Naive thymus-derived CD4-positive, alpha-beta T cell (primary cell): ENCODE measurements at regions of chrX and their contacts with region 1.

Region 1: GRCh38 chrX:48911412-48912182 is at the start of gene SLC35A2:
- DNase-seq: peak; percentile 75 to 92 (median 90)
- ATAC-seq: peak; percentile 78
- H3K4me3 ChIP-seq: peak within 1 kb of the TSS; percentile 77
- H3K4me3 Mint-ChIP-seq: peak within 1 kb of the TSS; percentile 86 to 96 (median 90)
- H3K27ac ChIP-seq: peak within 1 kb of the TSS; percentile 76
- H3K27ac Mint-ChIP-seq: peak within 1 kb of the TSS; percentile 86 to 98 (median 96)
- H3K4me1 ChIP-seq: peaks cover 32 to 42% of the 10 kb centered on the region in 2 donors
- H3K4me1 Mint-ChIP-seq: peaks cover 20 to 61% (median 42%) of the 10 kb centered on the region in 7 donors
- H3K27me3 ChIP-seq: no peaks in the 10 kb centered on the region
- H3K27me3 Mint-ChIP-seq: peaks cover 0 to 3% (median 0%) of the 10 kb centered on the region in 5 donors
- total RNA-seq, gene SLC35A2: 13.9 to 36.7 (median 18.5) TPM

Region 2: GRCh38 chrX:47125102-47125501 is 1786.5 kb before region 1 on chrX:
- CTCF ChIA-PET with region 1: no interaction called
- POLR2A ChIA-PET with region 1: no interaction called
- intact Hi-C with region 1: no loop called
- DNase-seq: no peak
- ATAC-seq: no peak
- H3K4me3 ChIP-seq: no peak overlapping the region
- H3K4me3 Mint-ChIP-seq: no peak overlapping the region
- H3K27ac ChIP-seq: no peak overlapping the region
- H3K27ac Mint-ChIP-seq: no peak overlapping the region
- H3K4me1 ChIP-seq: no peaks in the 10 kb centered on the region
- H3K4me1 Mint-ChIP-seq: peaks cover 0 to 4% (median 0%) of the 10 kb centered on the region in 7 donors
- H3K27me3 ChIP-seq: no peaks in the 10 kb centered on the region
- H3K27me3 Mint-ChIP-seq: no peaks in the 10 kb centered on the region

Region 3: DNA sequence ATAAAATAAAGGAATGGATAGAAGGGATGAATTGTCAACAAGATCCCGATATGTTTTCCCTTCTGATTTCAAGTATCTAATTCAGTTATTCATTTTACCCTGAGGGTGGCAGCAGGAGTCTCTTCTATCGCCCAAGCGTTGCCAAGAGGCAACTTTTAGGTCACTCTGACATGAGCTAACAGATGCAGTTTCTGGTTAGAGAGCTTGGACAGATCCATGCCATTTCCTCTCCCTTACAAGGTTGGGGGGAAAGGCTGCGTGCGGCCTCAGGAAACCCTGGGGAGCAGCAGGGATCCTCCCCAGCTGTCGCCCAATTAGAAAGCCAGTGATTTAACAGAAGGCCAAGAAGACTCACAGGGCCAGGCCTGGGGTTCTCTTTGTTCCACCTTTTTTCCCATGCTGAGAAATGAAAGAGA is 263.3 kb before region 1 on chrX:
- CTCF ChIA-PET with region 1: interaction called, 3 read pairs
- POLR2A ChIA-PET with region 1: interaction called, 8 read pairs
- intact Hi-C with region 1: loop called in 1 of 2 experiments (anchors 2 kb)
- DNase-seq: peak in 8 of 9 donors; percentile 17 to 54 (median 38)
- ATAC-seq: peak; percentile 70
- H3K4me3 ChIP-seq: no peak overlapping the region
- H3K4me3 Mint-ChIP-seq: no peak overlapping the region
- H3K27ac ChIP-seq: no peak overlapping the region
- H3K27ac Mint-ChIP-seq: peak overlapping the region in 3 of 9 donors; percentile 42 to 58 (median 53)
- H3K4me1 ChIP-seq: no peaks in the 10 kb centered on the region
- H3K4me1 Mint-ChIP-seq: peaks cover 0 to 18% (median 13%) of the 10 kb centered on the region in 7 donors
- H3K27me3 ChIP-seq: no peaks in the 10 kb centered on the region
- H3K27me3 Mint-ChIP-seq: no peaks in the 10 kb centered on the region

Region 4: DNA sequence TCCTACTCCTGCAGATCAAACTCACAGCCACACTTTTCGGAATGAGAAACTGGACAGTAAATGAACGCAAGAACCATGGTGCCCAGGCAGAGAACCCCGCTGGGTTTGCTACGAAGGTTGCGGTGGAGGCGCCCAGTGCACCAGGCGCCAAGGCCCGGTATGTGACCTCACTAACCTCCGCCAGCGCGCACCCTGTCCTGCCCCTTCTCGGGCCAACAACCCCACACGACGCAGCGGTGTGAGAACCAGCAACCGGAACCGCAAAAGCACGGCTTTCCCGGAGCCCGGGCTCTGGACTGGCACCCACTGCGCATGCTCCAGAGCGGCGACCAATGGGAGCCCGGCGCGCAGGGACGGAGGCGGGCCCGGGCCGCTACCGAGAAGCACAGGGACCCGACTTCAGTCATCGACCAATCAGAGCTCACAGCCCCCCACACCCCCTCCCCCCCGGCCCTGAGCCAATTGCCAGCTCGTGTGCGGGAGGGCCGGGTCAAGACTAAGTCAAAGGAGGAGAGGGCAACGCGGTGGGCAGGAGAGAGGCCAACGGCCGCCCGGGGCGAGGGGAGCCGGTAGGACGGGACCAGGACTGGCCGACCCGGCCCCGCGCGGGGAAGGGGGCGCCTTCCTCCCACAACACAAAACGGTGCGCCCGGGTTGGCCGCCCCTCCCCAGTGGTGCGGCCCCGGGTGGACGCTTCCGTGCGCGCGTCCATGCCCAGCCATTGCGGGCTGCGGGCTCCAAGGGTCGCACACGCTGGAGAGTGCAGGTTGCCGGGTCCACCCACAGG is 235.3 kb before region 1 on chrX:
- CTCF ChIA-PET with region 1: no interaction called
- POLR2A ChIA-PET with region 1: no interaction called
- intact Hi-C with region 1: loop called in 1 of 2 experiments (anchors 1 kb)
- DNase-seq: peak; percentile 74 to 89 (median 88)
- ATAC-seq: peak; percentile 98
- H3K4me3 ChIP-seq: peak overlapping the region; percentile 77
- H3K4me3 Mint-ChIP-seq: peak overlapping the region; percentile 88 to 94 (median 92)
- H3K27ac ChIP-seq: peak overlapping the region; percentile 90
- H3K27ac Mint-ChIP-seq: peak overlapping the region; percentile 82 to 95 (median 90)
- H3K4me1 ChIP-seq: no peaks in the 10 kb centered on the region
- H3K4me1 Mint-ChIP-seq: peaks cover 6 to 26% (median 22%) of the 10 kb centered on the region in 7 donors
- H3K27me3 ChIP-seq: no peaks in the 10 kb centered on the region
- H3K27me3 Mint-ChIP-seq: no peaks in the 10 kb centered on the region

Region 5: DNA sequence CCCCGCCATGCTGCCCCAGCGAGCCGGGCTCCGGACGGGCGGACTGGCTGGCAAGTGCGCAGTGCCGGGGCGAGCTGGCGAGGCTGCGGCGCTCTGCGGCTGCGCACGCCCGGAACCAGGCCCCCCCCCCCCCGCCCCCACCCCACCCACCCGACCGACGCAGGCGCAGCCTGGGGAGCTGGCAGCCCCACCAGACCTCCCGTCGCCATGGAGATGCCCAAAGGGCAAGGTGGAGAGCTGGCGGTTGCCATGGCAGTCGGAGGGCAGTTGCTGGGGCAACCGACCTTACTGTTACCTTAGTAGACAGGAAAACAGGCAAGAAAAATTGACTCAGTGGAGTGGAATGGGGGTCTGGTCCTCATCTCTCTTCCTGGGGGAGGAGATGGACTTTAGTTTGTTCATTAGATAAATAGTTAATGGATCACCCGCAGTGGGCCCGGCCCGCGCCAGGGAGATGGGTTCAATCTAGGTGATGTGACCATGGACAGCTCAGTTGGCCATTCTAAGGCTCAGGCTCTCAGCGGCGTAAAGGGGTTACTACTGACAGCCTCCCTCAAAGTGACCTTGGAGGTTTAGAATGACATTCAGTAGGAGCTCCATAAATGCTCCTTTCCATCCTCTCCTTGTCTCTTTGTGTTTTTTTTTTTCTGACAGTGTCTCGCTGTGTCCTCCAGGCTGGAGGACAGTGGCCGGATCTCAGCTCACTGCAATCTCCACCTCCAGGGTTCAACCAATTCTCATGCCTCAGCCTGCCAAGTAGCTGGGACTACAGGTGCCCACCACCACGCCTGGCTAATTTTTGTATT is 75.9 kb before region 1 on chrX and contains the start of gene PCSK1N:
- CTCF ChIA-PET with region 1: no interaction called
- POLR2A ChIA-PET with region 1: no interaction called
- intact Hi-C with region 1: no loop called
- DNase-seq: peak in 4 of 9 donors; percentile 8 to 50 (median 24)
- ATAC-seq: peak; percentile 76
- H3K4me3 ChIP-seq: peak within 1 kb of the TSS; percentile 44
- H3K4me3 Mint-ChIP-seq: peak within 1 kb of the TSS; percentile 79 to 92 (median 86)
- H3K27ac ChIP-seq: no peak within 1 kb of the TSS
- H3K27ac Mint-ChIP-seq: peak within 1 kb of the TSS in 7 of 9 donors; percentile 9 to 72 (median 41)
- H3K4me1 ChIP-seq: peaks cover 0 to 5% of the 10 kb centered on the region in 2 donors
- H3K4me1 Mint-ChIP-seq: peaks cover 8 to 21% (median 16%) of the 10 kb centered on the region in 7 donors
- H3K27me3 ChIP-seq: no peaks in the 10 kb centered on the region
- H3K27me3 Mint-ChIP-seq: peaks cover 2 to 53% (median 32%) of the 10 kb centered on the region in 5 donors
- total RNA-seq, gene PCSK1N: 0.36 to 14.0 (median 3.5) TPM